B cell (primary cell): ENCODE measurements at regions of chr2 and their contacts with region 1.

Region 1: DNA sequence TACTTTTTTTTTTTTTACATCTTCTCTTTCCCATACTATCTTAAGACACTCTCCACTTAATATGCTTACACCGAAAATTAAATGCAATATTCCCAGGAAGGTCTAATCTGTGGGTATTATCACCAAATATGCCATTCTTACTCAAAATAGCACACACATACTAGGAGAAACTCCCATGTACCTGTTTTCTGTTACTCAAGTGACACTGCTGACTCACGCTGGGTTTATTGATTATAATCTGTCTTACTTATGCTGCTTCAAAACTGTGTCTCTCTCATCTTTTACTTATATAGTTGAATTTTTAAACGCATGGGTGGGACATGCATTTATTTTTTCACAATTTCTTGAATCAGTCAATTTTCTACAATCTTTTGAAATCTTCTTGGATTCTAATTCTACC is 29.9 kb downstream of the MRPL19 start:
- DNase-seq: no peak
- ATAC-seq: no peak
- H3K4me3 ChIP-seq: no peak overlapping the region
- H3K4me3 Mint-ChIP-seq: no peak overlapping the region
- H3K27ac ChIP-seq: no peak overlapping the region
- H3K27ac Mint-ChIP-seq: no peak overlapping the region
- H3K4me1 ChIP-seq: peaks cover 0 to 2% of the 10 kb centered on the region in 2 donors
- H3K4me1 Mint-ChIP-seq: peaks cover 7% of the 10 kb centered on the region
- H3K27me3 ChIP-seq: no peaks in the 10 kb centered on the region
- H3K27me3 Mint-ChIP-seq: no peaks in the 10 kb centered on the region
- CTCF ChIP-seq: no peak

Region 2: GRCh38 chr2:75640621-75641121 is 35.8 kb before region 1 on chr2:
- CTCF ChIA-PET with region 1: interaction called, 30 read pairs
- POLR2A ChIA-PET with region 1: no interaction called
- intact Hi-C with region 1: loop called (anchors 1 kb)
- DNase-seq: peak; percentile 44
- ATAC-seq: peak; percentile 97
- H3K4me3 ChIP-seq: no peak overlapping the region
- H3K4me3 Mint-ChIP-seq: no peak overlapping the region
- H3K27ac ChIP-seq: no peak overlapping the region
- H3K27ac Mint-ChIP-seq: no peak overlapping the region
- H3K4me1 ChIP-seq: no peaks in the 10 kb centered on the region
- H3K4me1 Mint-ChIP-seq: no peaks in the 10 kb centered on the region
- H3K27me3 ChIP-seq: peaks cover 0 to 14% (median 2%) of the 10 kb centered on the region in 4 experiments
- H3K27me3 Mint-ChIP-seq: peaks cover 29% of the 10 kb centered on the region
- CTCF ChIP-seq: peak; percentile 99

Region 3: GRCh38 chr2:75646583-75647425 is 29.7 kb before region 1 on chr2 and contains the start of gene MRPL19:
- CTCF ChIA-PET with region 1: interaction called, 30 read pairs
- POLR2A ChIA-PET with region 1: no interaction called
- intact Hi-C with region 1: no loop called
- DNase-seq: peak; percentile 86
- ATAC-seq: peak; percentile 96
- H3K4me3 ChIP-seq: peak within 1 kb of the TSS; percentile 68 to 95 (median 74)
- H3K4me3 Mint-ChIP-seq: peak within 1 kb of the TSS; percentile 97
- H3K27ac ChIP-seq: peak within 1 kb of the TSS; percentile 56 to 79
- H3K27ac Mint-ChIP-seq: peak within 1 kb of the TSS; percentile 94
- H3K4me1 ChIP-seq: peaks cover 7 to 12% of the 10 kb centered on the region in 2 donors
- H3K4me1 Mint-ChIP-seq: peaks cover 25% of the 10 kb centered on the region
- H3K27me3 ChIP-seq: no peaks in the 10 kb centered on the region
- H3K27me3 Mint-ChIP-seq: no peaks in the 10 kb centered on the region
- CTCF ChIP-seq: no peak
- total RNA-seq, gene MRPL19: 28.4 and 36.7 TPM in 2 replicates

Region 4: DNA sequence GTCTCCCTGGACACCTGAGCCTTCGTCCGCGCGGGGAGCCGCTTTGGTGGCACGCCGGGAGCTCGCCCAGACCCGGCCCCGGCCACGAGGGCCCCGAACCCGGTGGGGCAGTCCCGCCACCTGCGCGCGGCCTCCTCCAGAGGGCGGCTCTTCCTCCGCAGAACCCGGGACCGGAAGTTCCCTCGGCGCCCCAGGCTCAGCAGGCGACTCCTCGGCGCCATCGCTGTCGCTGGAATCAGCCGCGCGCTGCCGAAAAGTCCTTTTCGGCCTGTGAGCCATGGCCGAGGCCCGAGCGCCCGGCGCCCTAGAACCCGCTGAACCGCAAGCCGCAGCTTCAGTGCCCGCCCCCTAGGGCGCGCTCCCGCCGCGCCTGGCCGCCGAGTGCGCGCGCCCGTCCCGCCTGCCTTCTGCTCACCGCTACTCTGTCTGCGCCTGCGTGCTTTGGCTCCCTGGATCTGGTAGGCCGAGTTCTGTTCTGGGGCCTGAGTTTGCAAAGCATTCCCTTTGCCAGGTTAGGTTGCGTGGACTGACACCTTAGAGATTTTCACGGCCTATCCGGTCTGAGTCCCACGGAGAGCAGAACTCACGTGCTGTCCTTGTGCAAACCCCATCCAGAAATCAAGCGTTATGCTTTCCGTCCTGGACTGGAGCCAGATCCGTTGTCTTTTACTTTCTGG is 34.3 kb after region 1 on chr2 and contains the start of gene GCFC2:
- CTCF ChIA-PET with region 1: interaction called, 4 read pairs
- POLR2A ChIA-PET with region 1: no interaction called
- intact Hi-C with region 1: loop called (anchors 5 kb)
- DNase-seq: peak; percentile 91
- ATAC-seq: peak; percentile 90
- H3K4me3 ChIP-seq: peak within 1 kb of the TSS; percentile 65 to 72 (median 65)
- H3K4me3 Mint-ChIP-seq: peak within 1 kb of the TSS; percentile 87
- H3K27ac ChIP-seq: peak within 1 kb of the TSS; percentile 83 to 88
- H3K27ac Mint-ChIP-seq: peak within 1 kb of the TSS; percentile 86
- H3K4me1 ChIP-seq: peaks cover 5 to 14% of the 10 kb centered on the region in 2 donors
- H3K4me1 Mint-ChIP-seq: peaks cover 27% of the 10 kb centered on the region
- H3K27me3 ChIP-seq: no peaks in the 10 kb centered on the region
- H3K27me3 Mint-ChIP-seq: peaks cover 4% of the 10 kb centered on the region
- CTCF ChIP-seq: peak; percentile 51
- total RNA-seq, gene GCFC2: 19.7 and 20.4 TPM in 2 replicates